Cardiac septum (tissue), 1 donor: ENCODE measurements at regions of chr1 and their contacts with region 1.

Region 1: DNA sequence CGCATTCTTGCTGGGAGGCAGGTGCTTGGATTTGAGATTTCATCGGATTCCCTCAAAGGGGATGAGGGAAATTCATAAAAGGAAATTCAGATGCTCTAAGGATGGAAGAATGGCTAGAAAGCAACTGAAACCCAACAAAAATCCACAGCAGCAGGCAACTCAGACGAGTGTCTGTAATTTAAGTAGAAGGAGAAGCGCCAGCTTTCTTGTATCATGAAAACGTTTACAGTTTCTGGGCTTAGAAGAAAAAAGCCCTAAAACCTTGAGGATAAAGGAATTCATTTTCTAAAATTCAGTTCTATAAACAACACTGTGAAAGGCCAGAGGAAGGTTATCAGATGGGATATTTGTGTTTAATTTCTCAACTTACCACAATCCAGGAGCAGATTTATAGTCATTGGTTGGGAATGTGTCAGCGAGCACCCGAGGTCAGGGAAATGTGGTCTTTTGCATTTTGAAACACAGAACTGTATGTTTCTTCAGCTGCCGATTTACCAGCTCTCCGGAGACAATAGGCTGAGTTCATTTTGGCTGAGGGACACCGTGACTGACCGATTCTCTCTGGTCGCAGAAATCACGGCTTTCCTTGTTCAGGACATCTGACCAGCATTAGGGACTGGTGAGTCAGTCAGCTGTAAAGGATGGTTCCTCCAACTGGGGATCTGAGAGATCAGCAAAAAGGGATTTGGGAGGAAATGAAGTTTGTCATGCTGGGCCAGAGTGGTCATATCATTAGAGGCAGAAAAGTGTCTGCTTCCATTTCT is 111.6 kb upstream of the ERRFI1 start:
- DNase-seq: no peak

Region 2: DNA sequence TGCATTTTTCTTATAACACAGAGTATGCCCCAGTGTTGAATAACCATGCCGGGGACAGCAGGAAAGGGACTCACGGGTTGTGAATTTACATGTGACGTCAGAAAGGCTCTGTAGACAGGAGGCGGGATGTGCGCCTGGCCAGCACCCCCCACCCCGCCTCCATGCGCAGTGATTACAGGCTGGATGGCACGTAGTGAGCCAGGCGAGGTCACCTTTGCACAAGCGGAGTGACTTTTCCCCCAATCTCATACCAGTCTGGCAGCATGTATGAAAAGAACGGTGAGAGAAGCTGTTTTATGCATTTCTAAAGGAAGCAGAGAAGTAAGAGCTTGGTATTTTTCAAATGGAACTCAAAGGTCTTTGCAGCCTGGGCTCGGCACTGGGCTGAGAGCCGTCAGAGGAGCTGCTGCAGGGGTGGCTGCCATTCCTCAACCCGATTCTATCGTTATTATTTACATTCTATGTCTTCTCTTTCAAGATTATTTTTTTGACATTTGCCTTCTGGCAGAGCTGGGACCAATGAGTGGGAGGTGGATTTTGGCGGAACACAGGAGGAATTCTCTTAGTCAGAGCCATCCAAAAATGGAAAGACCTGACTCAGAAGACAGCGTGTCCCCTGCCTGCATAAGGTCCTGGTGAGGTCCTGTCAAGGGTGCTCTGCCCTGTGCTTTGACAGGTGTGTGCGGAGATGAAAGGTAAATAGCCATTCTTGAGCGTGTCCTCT is 64.7 kb after region 1 on chr1:
- intact Hi-C with region 1: loop called (anchors 5 kb)
- DNase-seq: no peak